Activated T-helper 2 cell treated with anti-CD3 and anti-CD28 coated beads, Interferon-gamma antibody, Interleukin-2, Interleukin-4, amounts not matched to agents 10 μg/mL and 5 μg/mL and 100 μg/mL, durations not matched to agents 14 hours and 24 hours and 36 hours (primary cell): ENCODE measurements at regions of chr2 and their contacts with region 1.

Region 1: GRCh38 chr2:229825476-229825875 is 96.3 kb downstream of the TRIP12 start:
- DNase-seq: no peak
- H3K4me3 Mint-ChIP-seq: no peak overlapping the region
- H3K27ac Mint-ChIP-seq: no peak overlapping the region
- H3K4me1 Mint-ChIP-seq: peaks cover 21% of the 10 kb centered on the region
- H3K27me3 Mint-ChIP-seq: no peaks in the 10 kb centered on the region

Region 2: GRCh38 chr2:229852565-229852964 is 27.1 kb after region 1 on chr2:
- intact Hi-C with region 1: loop called (anchors 2 kb)
- DNase-seq: peak; percentile 31
- H3K4me3 Mint-ChIP-seq: no peak overlapping the region
- H3K27ac Mint-ChIP-seq: no peak overlapping the region
- H3K4me1 Mint-ChIP-seq: peaks cover 44% of the 10 kb centered on the region
- H3K27me3 Mint-ChIP-seq: no peaks in the 10 kb centered on the region

Region 3: GRCh38 chr2:229921892-229922445 is 96.5 kb after region 1 on chr2 and contains the start of gene TRIP12:
- intact Hi-C with region 1: loop called (anchors 1 kb)
- DNase-seq: peak; percentile 89
- H3K4me3 Mint-ChIP-seq: peak within 1 kb of the TSS; percentile 100
- H3K27ac Mint-ChIP-seq: peak within 1 kb of the TSS; percentile 98
- H3K4me1 Mint-ChIP-seq: peaks cover 31% of the 10 kb centered on the region
- H3K27me3 Mint-ChIP-seq: no peaks in the 10 kb centered on the region
- total RNA-seq, gene TRIP12: 256 and 269 TPM in 2 replicates

Region 4: DNA sequence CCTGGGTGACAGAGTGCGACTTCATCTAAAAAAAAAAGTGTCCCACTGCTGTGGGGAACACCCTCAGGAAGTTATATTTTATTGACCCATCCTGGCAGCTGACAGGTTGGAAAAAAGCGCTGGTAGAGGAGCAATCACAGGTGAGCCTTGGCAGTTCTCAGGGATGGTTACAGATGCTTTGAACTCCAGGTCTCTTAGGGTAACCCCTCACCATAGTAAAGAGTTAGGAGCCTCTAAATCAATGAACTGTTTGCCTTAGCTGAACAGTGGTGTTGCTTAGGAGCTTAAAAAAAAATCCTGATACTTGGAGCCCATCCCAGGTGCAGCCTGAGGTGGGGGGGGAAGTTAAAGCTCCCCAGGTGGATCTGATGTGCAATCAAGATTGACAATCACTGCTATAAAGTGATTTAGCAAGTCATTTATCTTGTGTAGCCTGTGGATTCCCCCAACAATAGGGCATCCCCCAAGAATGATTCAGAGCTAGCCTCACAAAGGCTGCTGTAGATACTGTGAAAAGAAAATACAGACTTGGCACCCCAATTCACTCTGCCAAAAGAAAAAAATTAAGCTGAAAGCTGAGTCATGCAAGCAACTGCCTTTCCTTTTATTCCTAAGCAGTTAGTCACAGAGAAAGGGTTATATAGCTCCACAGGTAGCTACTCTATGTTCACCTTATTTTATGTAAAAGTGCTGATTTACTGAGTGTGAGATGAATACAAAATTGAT is 228.4 kb after region 1 on chr2:
- intact Hi-C with region 1: loop called (anchors 5 kb)
- DNase-seq: no peak
- H3K4me3 Mint-ChIP-seq: no peak overlapping the region
- H3K27ac Mint-ChIP-seq: no peak overlapping the region
- H3K4me1 Mint-ChIP-seq: peaks cover 15% of the 10 kb centered on the region
- H3K27me3 Mint-ChIP-seq: no peaks in the 10 kb centered on the region